Panc1 (cell line): ENCODE measurements at regions of chr12 and their contacts with region 1.

Region 1: GRCh38 chr12:6295094-6295811 is 15.2 kb upstream of the PLEKHG6 start:
- DNase-seq: no peak
- ATAC-seq: peak; percentile 84
- H3K4me3 ChIP-seq: no peak overlapping the region
- H3K27ac ChIP-seq: peak overlapping the region; percentile 69
- H3K4me1 ChIP-seq: peaks cover 4% of the 10 kb centered on the region
- H3K27me3 ChIP-seq: no peaks in the 10 kb centered on the region
- CTCF ChIP-seq: no peak

Region 2: DNA sequence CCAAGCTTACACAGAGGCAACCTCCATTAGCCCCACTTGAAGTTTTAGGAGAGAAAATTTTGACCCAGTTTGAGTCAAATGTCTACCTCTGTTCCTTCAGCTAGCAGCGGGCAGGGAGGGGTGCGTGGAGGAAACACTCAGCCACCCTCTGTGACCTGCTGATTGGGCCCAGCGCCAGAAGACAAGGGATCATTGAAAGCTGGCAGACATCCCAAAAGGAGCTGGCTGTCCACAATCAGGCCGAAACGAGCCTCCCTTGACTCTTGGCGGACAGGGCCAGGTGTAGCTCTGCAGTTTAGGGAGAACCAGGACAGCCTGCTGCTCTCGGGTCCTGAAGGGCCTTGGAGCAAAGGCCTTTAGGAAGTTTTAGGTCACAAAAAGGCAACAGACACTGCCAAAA is 53.8 kb before region 1 on chr12:
- CTCF ChIA-PET with region 1: no interaction called
- POLR2A ChIA-PET with region 1: interaction called, 13 read pairs
- in situ Hi-C with region 1: no loop called
- intact Hi-C with region 1: no loop called
- DNase-seq: no peak
- ATAC-seq: no peak
- H3K4me3 ChIP-seq: no peak overlapping the region
- H3K27ac ChIP-seq: no peak overlapping the region
- H3K4me1 ChIP-seq: no peaks in the 10 kb centered on the region
- H3K27me3 ChIP-seq: no peaks in the 10 kb centered on the region
- CTCF ChIP-seq: no peak

Region 3: GRCh38 chr12:6278439-6279255 is 16.6 kb before region 1 on chr12:
- CTCF ChIA-PET with region 1: no interaction called
- POLR2A ChIA-PET with region 1: interaction called, 18 read pairs
- in situ Hi-C with region 1: no loop called
- intact Hi-C with region 1: no loop called
- DNase-seq: no peak
- ATAC-seq: peak; percentile 88
- H3K4me3 ChIP-seq: peak overlapping the region; percentile 50 to 55
- H3K27ac ChIP-seq: peak overlapping the region; percentile 84
- H3K4me1 ChIP-seq: peaks cover 21% of the 10 kb centered on the region
- H3K27me3 ChIP-seq: no peaks in the 10 kb centered on the region
- CTCF ChIP-seq: peak; percentile 96

Region 4: DNA sequence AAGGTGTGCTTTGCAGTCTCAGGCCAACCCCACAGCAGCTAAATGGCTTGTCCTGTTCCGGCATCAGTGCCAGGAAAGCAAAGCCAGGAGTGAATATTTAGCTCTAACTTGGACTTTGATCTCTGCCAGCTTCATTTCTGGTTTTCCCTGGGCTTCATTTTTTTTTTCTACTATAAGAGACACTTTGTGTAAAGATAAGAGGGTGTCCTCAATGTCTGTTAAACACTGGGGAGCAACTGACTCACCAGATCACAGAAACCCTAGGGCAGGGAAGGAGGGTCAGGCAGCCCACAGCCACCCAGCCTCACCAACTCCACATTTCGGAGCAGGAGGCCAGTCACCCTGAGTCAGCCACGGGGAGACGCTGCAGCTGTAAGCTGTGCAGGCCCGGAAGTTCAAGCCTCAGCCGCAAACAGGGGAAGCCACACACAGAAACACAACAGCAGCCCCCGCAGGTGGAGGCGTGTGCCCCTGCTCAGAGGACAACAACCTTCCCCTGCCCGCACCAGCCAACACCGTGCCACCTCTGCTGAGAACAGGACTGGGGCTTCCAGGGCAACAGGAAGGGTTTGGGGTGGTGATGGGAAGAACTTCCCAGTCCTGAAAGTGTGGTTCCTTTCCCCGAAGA is 40.3 kb after region 1 on chr12:
- CTCF ChIA-PET with region 1: no interaction called
- POLR2A ChIA-PET with region 1: interaction called, 10 read pairs
- in situ Hi-C with region 1: no loop called
- intact Hi-C with region 1: no loop called
- DNase-seq: no peak
- ATAC-seq: peak; percentile 12; the same call in 1 of the 2 replicates
- H3K4me3 ChIP-seq: peak overlapping the region; percentile 71 to 94
- H3K27ac ChIP-seq: peak overlapping the region; percentile 99
- H3K4me1 ChIP-seq: peaks cover 63% of the 10 kb centered on the region
- H3K27me3 ChIP-seq: no peaks in the 10 kb centered on the region
- CTCF ChIP-seq: no peak